ENCODE measurements at regions of chr16 and their contacts with region 1.

Region 1: GRCh38 chr16:58306327-58306726 is 11.5 kb upstream of the PRSS54 start:
- DNase-seq: peak; percentile 8 to 68 (median 38)
- ATAC-seq: no peak
- H3K4me3 ChIP-seq: no peak overlapping the region
- H3K4me3 Mint-ChIP-seq: no peak overlapping the region
- H3K27ac ChIP-seq: no peak overlapping the region
- H3K27ac Mint-ChIP-seq: no peak overlapping the region
- H3K4me1 ChIP-seq: no peaks in the 10 kb centered on the region
- H3K4me1 Mint-ChIP-seq: no peaks in the 10 kb centered on the region
- H3K27me3 ChIP-seq: no peaks in the 10 kb centered on the region
- H3K27me3 Mint-ChIP-seq: peaks cover 12% of the 10 kb centered on the region
- CTCF ChIP-seq: peak; percentile 62

Region 2: GRCh38 chr16:58025351-58026138 is 280.8 kb before region 1 on chr16 and contains the start of gene MMP15:
- CTCF ChIA-PET with region 1: interaction called, 3 read pairs
- POLR2A ChIA-PET with region 1: no interaction called
- intact Hi-C with region 1: loop called (anchors 2 kb)
- DNase-seq: peak; percentile 22 to 80 (median 56)
- ATAC-seq: peak; percentile 61
- H3K4me3 ChIP-seq: peak within 1 kb of the TSS; percentile 61
- H3K4me3 Mint-ChIP-seq: peak within 1 kb of the TSS; percentile 96
- H3K27ac ChIP-seq: no peak within 1 kb of the TSS
- H3K27ac Mint-ChIP-seq: peak within 1 kb of the TSS; percentile 81
- H3K4me1 ChIP-seq: peaks cover 34% of the 10 kb centered on the region
- H3K4me1 Mint-ChIP-seq: peaks cover 18% of the 10 kb centered on the region
- H3K27me3 ChIP-seq: peaks cover 7 to 13% of the 10 kb centered on the region in 2 experiments
- H3K27me3 Mint-ChIP-seq: peaks cover 9% of the 10 kb centered on the region
- CTCF ChIP-seq: no peak
- total RNA-seq, gene MMP15: 0.25 to 0.31 TPM

Region 3: GRCh38 chr16:58464047-58464915 is 158.0 kb after region 1 on chr16:
- CTCF ChIA-PET with region 1: no interaction called
- POLR2A ChIA-PET with region 1: no interaction called
- intact Hi-C with region 1: no loop called
- DNase-seq: no peak
- ATAC-seq: no peak
- H3K4me3 ChIP-seq: no peak overlapping the region
- H3K4me3 Mint-ChIP-seq: peak overlapping the region; percentile 72
- H3K27ac ChIP-seq: no peak overlapping the region
- H3K27ac Mint-ChIP-seq: no peak overlapping the region
- H3K4me1 ChIP-seq: peaks cover 13% of the 10 kb centered on the region
- H3K4me1 Mint-ChIP-seq: no peaks in the 10 kb centered on the region
- H3K27me3 ChIP-seq: peaks cover 53 to 63% of the 10 kb centered on the region in 2 experiments
- H3K27me3 Mint-ChIP-seq: peaks cover 73% of the 10 kb centered on the region
- CTCF ChIP-seq: no peak